A673 (cell line): ENCODE measurements at regions of chr7 and their contacts with region 1.

Region 1: GRCh38 chr7:91264046-91264923 is at the start of gene FZD1:
- DNase-seq: peak; percentile 100
- H3K4me3 ChIP-seq: peak within 1 kb of the TSS; percentile 92
- H3K27ac ChIP-seq: peak within 1 kb of the TSS; percentile 97
- H3K4me1 ChIP-seq: peaks cover 21% of the 10 kb centered on the region
- H3K27me3 ChIP-seq: no peaks in the 10 kb centered on the region
- CTCF ChIP-seq: no peak
- total RNA-seq, gene FZD1: 47.6 and 49.9 TPM in 2 replicates

Region 2: DNA sequence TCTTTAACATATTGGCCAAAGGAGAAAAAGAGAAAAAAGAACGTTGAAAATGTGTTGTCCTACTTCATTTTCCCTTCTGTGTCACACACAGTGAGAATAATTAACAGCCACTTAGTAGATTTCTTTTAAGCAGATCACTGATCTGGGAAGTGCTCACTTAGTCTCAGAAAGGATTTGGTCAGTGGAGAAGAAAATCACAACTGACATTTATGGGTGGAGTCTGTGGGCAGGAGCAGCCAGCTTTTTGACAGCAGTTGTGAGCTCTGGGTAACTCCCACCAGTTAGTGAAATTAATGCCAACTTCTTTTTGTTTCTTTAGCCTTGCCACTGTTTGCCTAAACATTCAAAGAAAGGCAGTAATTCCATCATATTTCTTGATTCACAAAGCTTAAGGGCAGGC is 618.5 kb before region 1 on chr7:
- CTCF ChIA-PET with region 1: no interaction called
- POLR2A ChIA-PET with region 1: no interaction called
- intact Hi-C with region 1: no loop called
- DNase-seq: peak; percentile 33
- H3K4me3 ChIP-seq: no peak overlapping the region
- H3K27ac ChIP-seq: no peak overlapping the region
- H3K4me1 ChIP-seq: peaks cover 15% of the 10 kb centered on the region
- H3K27me3 ChIP-seq: no peaks in the 10 kb centered on the region
- CTCF ChIP-seq: no peak

Region 3: GRCh38 chr7:91000008-91000979 is 264.0 kb before region 1 on chr7:
- CTCF ChIA-PET with region 1: no interaction called
- POLR2A ChIA-PET with region 1: no interaction called
- intact Hi-C with region 1: no loop called
- DNase-seq: peak; percentile 9
- H3K4me3 ChIP-seq: no peak overlapping the region
- H3K27ac ChIP-seq: no peak overlapping the region
- H3K4me1 ChIP-seq: no peaks in the 10 kb centered on the region
- H3K27me3 ChIP-seq: no peaks in the 10 kb centered on the region
- CTCF ChIP-seq: no peak

Region 4: DNA sequence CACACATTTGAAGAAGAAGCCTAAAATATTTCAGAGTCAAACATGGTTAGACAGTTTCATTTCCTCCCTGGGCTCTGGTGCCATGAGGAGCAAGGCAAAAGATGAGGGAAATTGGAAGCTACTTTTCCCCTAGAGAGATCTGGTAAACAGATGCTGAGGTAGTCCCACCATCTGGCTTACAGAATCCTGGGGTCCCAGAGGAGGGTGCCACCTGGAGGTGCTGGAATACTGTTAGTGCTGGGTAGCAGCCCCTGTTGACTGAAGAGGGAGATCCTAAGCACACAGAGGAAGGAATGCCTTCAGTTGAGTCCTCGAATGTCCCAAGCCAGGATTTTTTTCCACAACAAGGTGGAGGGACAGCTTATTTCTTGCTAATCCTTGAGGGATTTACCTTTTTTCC is 160.1 kb after region 1 on chr7:
- CTCF ChIA-PET with region 1: interaction called, 3 read pairs
- POLR2A ChIA-PET with region 1: no interaction called
- intact Hi-C with region 1: loop called (anchors 5 kb)
- DNase-seq: peak; percentile 25
- H3K4me3 ChIP-seq: no peak overlapping the region
- H3K27ac ChIP-seq: no peak overlapping the region
- H3K4me1 ChIP-seq: peaks cover 5% of the 10 kb centered on the region
- H3K27me3 ChIP-seq: no peaks in the 10 kb centered on the region
- CTCF ChIP-seq: no peak